Cardiac septum (tissue), 1 donor: ENCODE measurements at regions of chr1 and their contacts with region 1.

Region 1: DNA sequence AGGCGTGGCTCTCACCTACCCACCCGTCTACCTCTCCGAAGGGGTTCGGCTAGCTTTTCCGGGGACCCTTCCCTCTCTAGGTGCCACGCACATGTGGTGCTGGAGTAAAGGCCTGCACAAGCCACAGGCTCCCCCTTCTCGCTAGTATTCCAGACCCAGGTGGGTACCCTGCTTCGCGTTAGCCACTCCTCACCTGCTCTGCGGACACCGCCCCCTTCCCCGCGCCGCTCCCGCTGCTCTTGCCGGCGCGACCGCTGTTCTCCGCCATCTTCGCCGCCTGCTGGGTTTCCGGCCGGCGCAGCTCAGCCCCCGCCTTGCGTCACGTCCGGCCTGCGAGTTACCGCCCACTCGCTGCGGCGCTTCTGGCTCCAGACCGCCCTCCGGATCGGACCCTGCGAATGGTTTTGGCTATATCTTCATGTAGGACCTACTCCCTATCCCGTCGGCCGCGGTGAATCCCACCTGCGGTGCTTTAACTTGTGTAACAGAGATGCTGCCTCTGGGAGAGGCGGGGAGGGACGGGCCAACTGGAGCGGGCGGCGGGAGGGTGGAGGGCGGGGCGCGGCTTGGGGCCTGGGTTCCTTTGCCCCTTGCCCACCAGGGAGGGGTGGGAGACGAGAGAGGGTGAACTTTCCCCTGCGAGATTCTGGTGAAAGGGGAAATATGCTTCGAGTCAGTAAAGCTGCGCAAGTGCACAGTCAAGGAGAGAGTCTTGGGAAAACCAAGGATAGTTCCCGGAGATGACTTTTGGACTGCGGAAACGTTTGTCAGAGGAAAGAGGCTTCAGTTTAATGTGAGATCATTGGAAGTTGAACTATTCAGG is at the starts of genes NIT1 and PFDN2:
- DNase-seq: peak; percentile 95
- total RNA-seq, gene NIT1: 31.3 TPM
- total RNA-seq, gene PFDN2: 43.1 TPM

Region 2: DNA sequence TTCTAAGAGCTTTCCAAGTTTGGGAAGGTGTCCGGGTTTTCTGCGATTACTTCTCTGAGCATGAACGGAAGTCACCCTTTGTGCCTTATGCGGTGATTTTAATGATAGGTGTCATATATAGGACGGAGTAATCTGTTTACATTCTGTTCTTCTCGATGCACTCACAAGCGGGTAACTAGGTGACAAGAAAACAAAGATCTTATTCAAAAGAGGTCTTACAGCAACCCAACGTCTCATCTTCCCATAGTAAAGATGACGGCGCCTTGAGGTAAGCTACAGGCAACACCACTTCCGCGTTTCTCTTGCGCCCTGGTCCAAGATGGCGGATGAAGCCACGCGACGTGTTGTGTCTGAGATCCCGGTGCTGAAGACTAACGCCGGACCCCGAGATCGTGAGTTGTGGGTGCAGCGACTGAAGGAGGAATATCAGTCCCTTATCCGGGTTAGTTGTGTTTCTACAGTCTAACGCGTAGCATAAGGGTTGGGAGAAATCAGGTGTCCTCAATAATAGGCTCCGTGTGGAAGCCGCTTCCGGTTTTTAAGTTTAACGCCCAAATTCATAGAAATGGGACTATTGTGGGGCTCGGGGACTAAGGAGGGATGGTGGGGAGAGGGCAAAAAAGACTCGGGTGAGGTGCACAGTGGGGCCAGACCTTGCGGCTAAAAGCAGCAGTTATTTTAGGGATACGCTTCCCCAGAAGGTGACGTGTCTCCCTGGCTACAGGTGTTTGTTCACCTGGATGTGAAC is 35.9 kb after region 1 on chr1 and contains the start of gene UFC1:
- intact Hi-C with region 1: loop called (anchors 5 kb)
- DNase-seq: peak; percentile 90
- total RNA-seq, gene UFC1: 73.6 TPM

Region 3: GRCh38 chr1:161216945-161217712 is 99.2 kb after region 1 on chr1:
- intact Hi-C with region 1: no loop called
- DNase-seq: no peak

Region 4: GRCh38 chr1:161238039-161238473 is 120.1 kb after region 1 on chr1 and contains the start of gene NR1I3:
- intact Hi-C with region 1: no loop called
- DNase-seq: no peak
- total RNA-seq, gene NR1I3: not detected